SK-N-SH (cell line): ENCODE measurements at regions of chr17 and their contacts with region 1.

Region 1: GRCh38 chr17:67891581-67892054 is 66.3 kb downstream of the BPTF start:
- DNase-seq: peak; percentile 67
- H3K4me3 ChIP-seq: no peak overlapping the region
- H3K27ac ChIP-seq: peak overlapping the region; percentile 39 to 40
- H3K4me1 ChIP-seq: peaks cover 7 to 13% of the 10 kb centered on the region in 2 experiments; a peak in 3 of 4 replicates
- H3K27me3 ChIP-seq: no peaks in the 10 kb centered on the region
- CTCF ChIP-seq: peak; percentile 70
- EP300 ChIP-seq: no peak
- RAD21 ChIP-seq: peak; percentile 67

Region 2: GRCh38 chr17:67824735-67825626 is 66.6 kb before region 1 on chr17 and contains the start of gene BPTF:
- CTCF ChIA-PET with region 1: interaction called, 7 read pairs
- POLR2A ChIA-PET with region 1: interaction called, 10 read pairs
- DNase-seq: peak; percentile 99
- H3K4me3 ChIP-seq: peak within 1 kb of the TSS; percentile 77 to 87
- H3K27ac ChIP-seq: peak within 1 kb of the TSS; percentile 34 to 94; a peak in 3 of 4 replicates
- H3K4me1 ChIP-seq: peaks cover 12 to 20% of the 10 kb centered on the region in 2 experiments; a peak in 3 of 4 replicates
- H3K27me3 ChIP-seq: no peaks in the 10 kb centered on the region
- CTCF ChIP-seq: peak; percentile 93
- EP300 ChIP-seq: peak in 1 of 2 experiments; percentile 47; a peak in 1 of 4 replicates
- RAD21 ChIP-seq: peak; percentile 56
- polyA plus RNA-seq, gene BPTF: 51.9 and 61.4 TPM in 2 replicates

Region 3: DNA sequence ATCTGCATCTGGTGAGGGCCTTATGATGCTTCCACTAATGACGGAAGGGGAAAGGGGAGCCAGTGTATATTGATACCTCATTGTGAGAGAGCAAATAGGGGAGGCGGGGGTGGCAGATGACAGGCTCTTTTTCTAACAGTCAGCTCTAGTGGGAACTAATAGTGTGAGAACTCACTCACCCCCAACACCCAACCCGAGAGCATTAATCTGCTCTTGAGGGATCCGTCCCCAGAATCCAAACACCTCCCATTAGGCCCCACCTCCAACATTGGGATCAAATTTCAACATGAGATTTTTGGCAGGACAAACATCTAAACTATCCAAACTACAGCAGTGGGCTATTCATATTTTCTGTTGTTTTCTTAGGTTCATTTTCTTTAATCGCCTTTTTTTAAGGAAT is 12.0 kb before region 1 on chr17:
- CTCF ChIA-PET with region 1: interaction called, 31 read pairs
- POLR2A ChIA-PET with region 1: no interaction called
- DNase-seq: no peak
- H3K4me3 ChIP-seq: no peak overlapping the region
- H3K27ac ChIP-seq: no peak overlapping the region
- H3K4me1 ChIP-seq: no peaks in the 10 kb centered on the region
- H3K27me3 ChIP-seq: no peaks in the 10 kb centered on the region
- CTCF ChIP-seq: no peak
- EP300 ChIP-seq: no peak
- RAD21 ChIP-seq: no peak

Region 4: GRCh38 chr17:67922503-67922902 is 30.9 kb after region 1 on chr17:
- CTCF ChIA-PET with region 1: interaction called, 10 read pairs
- POLR2A ChIA-PET with region 1: interaction called, 5 read pairs
- DNase-seq: no peak
- H3K4me3 ChIP-seq: no peak overlapping the region
- H3K27ac ChIP-seq: no peak overlapping the region
- H3K4me1 ChIP-seq: peaks cover 0 to 2% of the 10 kb centered on the region in 2 experiments; a peak in 2 of 4 replicates
- H3K27me3 ChIP-seq: no peaks in the 10 kb centered on the region
- CTCF ChIP-seq: no peak
- EP300 ChIP-seq: no peak
- RAD21 ChIP-seq: no peak